PC-9 (cell line): ENCODE measurements at regions of chr3 and their contacts with region 1.

Region 1: DNA sequence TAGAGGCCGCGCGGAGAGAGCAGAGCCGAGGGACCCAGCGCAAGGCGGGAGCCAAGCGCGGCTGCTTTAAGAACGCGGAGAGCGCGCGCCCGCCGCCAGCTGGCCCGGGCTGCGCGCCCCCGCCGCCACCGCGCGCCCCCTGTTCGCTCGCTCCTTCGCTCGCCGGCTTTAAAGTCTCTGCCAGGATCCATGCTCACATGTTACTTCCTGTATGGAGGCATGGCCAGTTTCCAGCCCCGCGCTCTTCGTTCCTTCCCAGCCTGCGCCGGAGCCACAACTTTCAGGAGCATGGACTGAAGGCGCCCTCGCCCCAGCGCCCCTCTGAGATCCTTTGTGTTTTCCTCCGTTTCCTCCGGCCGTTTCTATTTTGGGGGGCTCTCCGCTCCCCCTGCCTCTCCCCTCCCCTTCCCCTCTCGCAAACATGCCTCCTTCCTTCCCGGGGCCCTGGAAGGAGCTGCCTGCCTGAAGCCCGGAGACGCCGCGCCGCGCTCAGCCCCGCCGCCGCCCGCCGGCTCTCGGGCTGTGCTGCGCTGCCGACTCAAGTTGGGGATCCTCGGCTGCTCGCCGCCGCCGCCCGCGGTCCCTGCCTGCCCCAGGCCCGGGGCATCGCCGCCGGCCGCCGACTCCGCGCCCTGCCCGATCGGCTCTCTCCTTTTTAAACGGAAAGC is at the start of gene PTPRG:
- DNase-seq: peak; percentile 64 to 83
- H3K4me3 ChIP-seq: peak within 1 kb of the TSS; percentile 74
- H3K27ac ChIP-seq: 0 out of 2 replicates have a peak within 1 kb of the TSS, but pooled peaks have one; percentile 1
- H3K4me1 ChIP-seq: no peaks in the 10 kb centered on the region
- H3K27me3 ChIP-seq: no peaks in the 10 kb centered on the region
- CTCF ChIP-seq: no peak
- total RNA-seq, gene PTPRG: 22.0 and 32.9 TPM in 2 replicates

Region 2: DNA sequence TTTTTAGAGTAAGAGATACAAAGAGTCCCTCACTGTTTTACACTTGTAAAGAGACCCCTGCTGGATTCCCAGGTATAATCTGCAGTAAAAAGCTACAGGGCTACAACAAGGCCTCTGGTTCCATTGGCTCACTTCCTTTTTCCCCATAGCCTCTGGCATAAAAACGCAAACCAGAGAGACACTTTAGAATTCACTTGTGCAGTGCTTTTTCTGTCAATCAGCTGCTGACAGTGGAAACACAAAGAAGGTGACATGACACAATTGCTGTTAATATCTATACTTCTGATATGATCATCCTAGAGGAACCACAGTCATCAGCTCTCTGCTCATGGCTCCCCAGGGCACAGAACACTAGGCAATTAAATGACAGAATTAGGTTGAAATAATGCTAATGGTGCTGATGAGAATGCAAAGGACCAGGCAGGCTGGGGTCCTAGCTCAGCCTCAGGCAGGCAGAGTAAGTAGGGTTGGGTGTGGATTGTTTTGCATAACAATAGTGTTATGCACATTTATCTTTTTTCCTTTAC is 1843.8 kb before region 1 on chr3:
- CTCF ChIA-PET with region 1: no interaction called
- POLR2A ChIA-PET with region 1: interaction called, 15 read pairs
- intact Hi-C with region 1: no loop called
- DNase-seq: no peak
- H3K4me3 ChIP-seq: no peak overlapping the region
- H3K27ac ChIP-seq: no peak overlapping the region
- H3K4me1 ChIP-seq: no peaks in the 10 kb centered on the region
- H3K27me3 ChIP-seq: no peaks in the 10 kb centered on the region
- CTCF ChIP-seq: no peak

Region 3: GRCh38 chr3:61627768-61628185 is 66.3 kb after region 1 on chr3:
- CTCF ChIA-PET with region 1: no interaction called
- POLR2A ChIA-PET with region 1: no interaction called
- intact Hi-C with region 1: loop called (anchors 1 kb)
- DNase-seq: peak; percentile 52 to 76
- H3K4me3 ChIP-seq: no peak overlapping the region
- H3K27ac ChIP-seq: 0 out of 2 replicates have a peak overlapping the region, but pooled peaks have one; percentile 5
- H3K4me1 ChIP-seq: peaks cover 33% of the 10 kb centered on the region
- H3K27me3 ChIP-seq: no peaks in the 10 kb centered on the region
- CTCF ChIP-seq: no peak

Region 4: GRCh38 chr3:61725851-61726333 is 164.4 kb after region 1 on chr3:
- CTCF ChIA-PET with region 1: no interaction called
- POLR2A ChIA-PET with region 1: interaction called, 12 read pairs
- intact Hi-C with region 1: no loop called
- DNase-seq: no peak
- H3K4me3 ChIP-seq: no peak overlapping the region
- H3K27ac ChIP-seq: no peak overlapping the region
- H3K4me1 ChIP-seq: no peaks in the 10 kb centered on the region
- H3K27me3 ChIP-seq: no peaks in the 10 kb centered on the region
- CTCF ChIP-seq: no peak

Region 5: GRCh38 chr3:61946570-61947324 is 385.2 kb after region 1 on chr3:
- CTCF ChIA-PET with region 1: no interaction called
- POLR2A ChIA-PET with region 1: interaction called, 18 read pairs
- intact Hi-C with region 1: no loop called
- DNase-seq: no peak
- H3K4me3 ChIP-seq: no peak overlapping the region
- H3K27ac ChIP-seq: no peak overlapping the region
- H3K4me1 ChIP-seq: no peaks in the 10 kb centered on the region
- H3K27me3 ChIP-seq: no peaks in the 10 kb centered on the region
- CTCF ChIP-seq: no peak

Region 6: DNA sequence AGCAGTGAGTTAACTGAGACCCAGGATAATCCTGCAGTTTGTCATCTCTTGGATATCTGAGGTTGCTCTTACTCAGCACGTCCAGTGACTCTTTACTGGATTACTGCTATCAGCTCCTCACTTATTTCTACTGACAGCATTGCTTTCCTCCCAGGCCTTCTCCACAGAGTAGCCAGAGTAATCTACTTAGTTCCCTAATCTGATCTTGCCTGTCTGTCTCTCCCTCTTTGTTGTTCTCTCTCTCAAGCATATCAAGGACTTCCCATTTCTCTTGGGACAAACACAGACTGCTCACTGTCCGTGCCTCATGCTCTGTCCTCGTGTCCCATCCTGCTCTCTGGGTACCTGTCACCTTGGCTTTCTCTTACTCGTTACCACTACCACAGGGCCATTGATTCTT is 435.6 kb after region 1 on chr3:
- CTCF ChIA-PET with region 1: no interaction called
- POLR2A ChIA-PET with region 1: no interaction called
- intact Hi-C with region 1: no loop called
- DNase-seq: no peak
- H3K4me3 ChIP-seq: no peak overlapping the region
- H3K27ac ChIP-seq: no peak overlapping the region
- H3K4me1 ChIP-seq: no peaks in the 10 kb centered on the region
- H3K27me3 ChIP-seq: no peaks in the 10 kb centered on the region
- CTCF ChIP-seq: no peak

Region 7: GRCh38 chr3:62051507-62051906 is 490.0 kb after region 1 on chr3:
- CTCF ChIA-PET with region 1: interaction called, 9 read pairs
- POLR2A ChIA-PET with region 1: no interaction called
- intact Hi-C with region 1: loop called (anchors 2 kb)
- DNase-seq: peak in 1 of 2 experiments; percentile 13
- H3K4me3 ChIP-seq: no peak overlapping the region
- H3K27ac ChIP-seq: no peak overlapping the region
- H3K4me1 ChIP-seq: no peaks in the 10 kb centered on the region
- H3K27me3 ChIP-seq: no peaks in the 10 kb centered on the region
- CTCF ChIP-seq: peak; percentile 35; the same call in 1 of the 2 replicates

Region 8: GRCh38 chr3:62188681-62189383 is 627.3 kb after region 1 on chr3:
- CTCF ChIA-PET with region 1: no interaction called
- POLR2A ChIA-PET with region 1: interaction called, 13 read pairs
- intact Hi-C with region 1: loop called (anchors 1 kb)
- DNase-seq: peak in 1 of 2 experiments; percentile 60
- H3K4me3 ChIP-seq: no peak overlapping the region
- H3K27ac ChIP-seq: no peak overlapping the region
- H3K4me1 ChIP-seq: no peaks in the 10 kb centered on the region
- H3K27me3 ChIP-seq: no peaks in the 10 kb centered on the region
- CTCF ChIP-seq: peak; percentile 74